CD14-positive monocyte (primary cell): ENCODE measurements at regions of chr22 and their contacts with region 1.

Region 1: GRCh38 chr22:31917227-31917921 is 27.0 kb upstream of the YWHAH start:
- DNase-seq: peak; percentile 74 to 90 (median 84)
- H3K4me3 ChIP-seq: peak overlapping the region in 2 of 3 experiments; percentile 20 to 68
- H3K4me3 Mint-ChIP-seq: peak overlapping the region; percentile 65 to 84
- H3K27ac ChIP-seq: peak overlapping the region; percentile 52 to 79
- H3K27ac Mint-ChIP-seq: peak overlapping the region; percentile 73 to 91 (median 86)
- H3K4me1 ChIP-seq: peaks cover 70 to 73% of the 10 kb centered on the region in 2 donors
- H3K4me1 Mint-ChIP-seq: peaks cover 73% of the 10 kb centered on the region
- H3K27me3 ChIP-seq: no peaks in the 10 kb centered on the region
- H3K27me3 Mint-ChIP-seq: peaks cover 0 to 1% (median 0%) of the 10 kb centered on the region in 3 donors
- CTCF ChIP-seq: no peak

Region 2: DNA sequence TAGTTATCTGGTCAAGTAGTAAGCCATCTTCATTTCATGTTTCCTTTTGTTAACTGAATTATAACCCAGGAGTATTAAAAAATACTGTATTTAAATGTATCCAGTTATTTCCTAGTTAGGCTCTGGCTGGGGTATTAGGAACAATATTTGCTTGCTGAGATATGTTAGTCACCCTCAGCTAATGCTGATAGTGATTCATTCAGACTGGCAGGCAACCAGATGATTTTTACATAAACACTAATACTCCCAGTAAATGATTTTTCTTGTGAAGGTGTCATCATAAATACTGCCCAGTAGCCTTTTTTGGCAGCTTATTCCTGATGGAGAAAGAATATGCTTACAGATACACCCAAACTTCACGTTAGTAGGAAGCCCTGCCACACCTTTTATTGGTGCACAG is 35.1 kb after region 1 on chr22:
- intact Hi-C with region 1: loop called (anchors 5 kb)
- DNase-seq: peak in 1 of 3 donors; percentile 31
- H3K4me3 ChIP-seq: no peak overlapping the region
- H3K4me3 Mint-ChIP-seq: no peak overlapping the region
- H3K27ac ChIP-seq: peak overlapping the region in 1 of 2 donors; percentile 75
- H3K27ac Mint-ChIP-seq: peak overlapping the region in 3 of 7 donors; percentile 41 to 88 (median 55)
- H3K4me1 ChIP-seq: peaks cover 21 to 34% of the 10 kb centered on the region in 2 donors
- H3K4me1 Mint-ChIP-seq: peaks cover 51% of the 10 kb centered on the region
- H3K27me3 ChIP-seq: no peaks in the 10 kb centered on the region
- H3K27me3 Mint-ChIP-seq: no peaks in the 10 kb centered on the region
- CTCF ChIP-seq: no peak

Region 3: DNA sequence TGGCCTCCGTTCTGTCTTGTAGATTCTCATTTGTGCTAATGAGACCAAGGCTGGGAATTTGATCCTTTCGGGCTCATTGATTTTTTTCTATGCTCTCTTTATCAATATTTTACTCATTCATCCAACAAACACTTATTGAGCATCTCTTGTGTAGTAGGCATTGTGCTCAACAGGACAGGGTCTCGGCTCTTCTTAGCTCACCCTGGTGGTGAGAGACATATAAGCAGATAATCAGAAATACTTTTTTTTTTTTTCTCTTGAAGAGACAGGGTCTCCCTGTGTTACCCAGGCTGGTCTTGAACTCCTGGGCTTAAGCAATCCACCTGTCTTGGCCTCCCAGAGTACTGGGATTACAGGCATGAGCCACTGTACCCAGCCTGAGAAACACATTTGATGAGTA is 77.7 kb after region 1 on chr22:
- intact Hi-C with region 1: no loop called
- DNase-seq: no peak
- H3K4me3 ChIP-seq: no peak overlapping the region
- H3K4me3 Mint-ChIP-seq: no peak overlapping the region
- H3K27ac ChIP-seq: no peak overlapping the region
- H3K27ac Mint-ChIP-seq: no peak overlapping the region
- H3K4me1 ChIP-seq: no peaks in the 10 kb centered on the region
- H3K4me1 Mint-ChIP-seq: no peaks in the 10 kb centered on the region
- H3K27me3 ChIP-seq: no peaks in the 10 kb centered on the region
- H3K27me3 Mint-ChIP-seq: peaks cover 2 to 9% (median 6%) of the 10 kb centered on the region in 3 donors
- CTCF ChIP-seq: no peak